ENCODE measurements at regions of chr16 and their contacts with region 1.

Region 1: GRCh38 chr16:84952335-84953189 is 58.8 kb downstream of the ZDHHC7 start:
- DNase-seq: peak; percentile 75 to 81 (median 78)
- ATAC-seq: peak; percentile 90 to 96 (median 93)
- H3K4me3 ChIP-seq: no peak overlapping the region
- H3K27ac ChIP-seq: peak overlapping the region in 11 of 12 donors; percentile 3 to 82 (median 39)
- H3K4me1 ChIP-seq: peaks cover 0 to 21% (median 14%) of the 10 kb centered on the region in 12 donors
- H3K27me3 ChIP-seq: no peaks in the 10 kb centered on the region
- CTCF ChIP-seq: peak; percentile 90 to 95 (median 93)
- POLR2A ChIP-seq: no peak

Region 2: GRCh38 chr16:84462261-84463210 is 490.0 kb before region 1 on chr16:
- intact Hi-C with region 1: no loop called
- DNase-seq: no peak
- ATAC-seq: no peak
- H3K4me3 ChIP-seq: no peak overlapping the region
- H3K27ac ChIP-seq: no peak overlapping the region
- H3K4me1 ChIP-seq: peaks cover 0 to 11% (median 0%) of the 10 kb centered on the region in 12 donors
- H3K27me3 ChIP-seq: no peaks in the 10 kb centered on the region
- CTCF ChIP-seq: no peak
- POLR2A ChIP-seq: no peak

Region 3: DNA sequence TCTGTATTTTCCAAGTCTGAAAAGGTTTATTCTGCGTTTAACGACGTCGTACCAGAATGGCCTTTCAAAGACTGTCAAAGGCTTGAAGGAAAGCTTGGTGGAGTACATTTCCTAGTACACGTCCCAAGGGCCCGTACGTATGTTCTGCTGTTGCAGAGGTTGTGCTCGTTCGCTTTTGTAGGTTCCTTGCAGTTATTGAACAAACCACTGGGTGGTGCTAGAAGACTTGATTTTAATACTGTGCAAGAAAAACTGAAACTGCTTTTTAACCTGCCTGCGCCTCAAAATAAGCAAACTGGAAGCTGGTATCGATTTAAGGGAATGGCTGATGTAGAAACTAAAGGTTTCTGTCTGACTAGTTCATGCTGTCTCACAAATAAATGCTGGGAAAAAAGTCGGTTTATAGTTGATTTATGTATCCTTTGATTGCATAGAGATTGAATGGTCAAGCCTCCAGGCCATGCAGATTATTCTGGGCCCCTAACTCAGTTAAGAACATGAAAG is 198.2 kb before region 1 on chr16:
- intact Hi-C with region 1: loop called (anchors 1 to 5 kb)
- DNase-seq: peak in 3 of 5 donors; percentile 46 to 62 (median 60)
- ATAC-seq: peak in 3 of 4 donors; percentile 75 to 82 (median 78)
- H3K4me3 ChIP-seq: no peak overlapping the region
- H3K27ac ChIP-seq: peak overlapping the region in 1 of 12 donors; percentile 54
- H3K4me1 ChIP-seq: peaks cover 0 to 66% (median 16%) of the 10 kb centered on the region in 12 donors
- H3K27me3 ChIP-seq: no peaks in the 10 kb centered on the region
- CTCF ChIP-seq: peak; percentile 75 to 90 (median 84)
- POLR2A ChIP-seq: no peak

Region 4: GRCh38 chr16:84819644-84820324 is 132.8 kb before region 1 on chr16 and contains the start of gene CRISPLD2:
- intact Hi-C with region 1: loop called in 1 of 10 experiments (anchors 5 kb)
- DNase-seq: peak; percentile 91 to 97 (median 96)
- ATAC-seq: peak; percentile 82 to 97 (median 93)
- H3K4me3 ChIP-seq: peak within 1 kb of the TSS; percentile 9 to 84 (median 62)
- H3K27ac ChIP-seq: peak within 1 kb of the TSS in 9 of 12 donors; percentile 20 to 97 (median 75)
- H3K4me1 ChIP-seq: peaks cover 0 to 42% (median 8%) of the 10 kb centered on the region in 12 donors
- H3K27me3 ChIP-seq: peaks cover 0 to 9% (median 0%) of the 10 kb centered on the region in 9 donors
- CTCF ChIP-seq: no peak
- POLR2A ChIP-seq: peak; percentile 71 to 95
- total RNA-seq, gene CRISPLD2: 8.0 to 153 (median 12.9) TPM

Region 5: DNA sequence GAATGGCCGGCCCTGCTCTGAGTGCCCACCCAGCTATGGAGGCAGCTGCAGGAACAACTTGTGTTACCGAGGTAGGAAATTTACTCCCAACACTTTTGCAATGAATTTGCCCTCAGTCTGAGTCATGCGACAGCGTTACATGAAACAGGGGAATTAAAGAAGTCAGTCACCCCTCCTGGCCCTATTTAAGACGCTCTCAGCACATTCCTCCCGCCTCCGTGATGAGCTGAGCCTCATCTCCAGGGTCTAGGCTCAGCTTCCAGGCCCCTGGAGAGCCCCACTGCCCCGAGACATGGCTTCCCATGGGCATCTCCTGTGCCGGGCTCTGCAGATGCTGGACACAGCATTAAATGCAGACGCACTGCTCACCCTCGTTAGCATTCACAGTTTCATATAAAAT is 97.8 kb before region 1 on chr16:
- intact Hi-C with region 1: no loop called
- DNase-seq: no peak
- ATAC-seq: no peak
- H3K4me3 ChIP-seq: no peak overlapping the region
- H3K27ac ChIP-seq: no peak overlapping the region
- H3K4me1 ChIP-seq: no peaks in the 10 kb centered on the region
- H3K27me3 ChIP-seq: no peaks in the 10 kb centered on the region
- CTCF ChIP-seq: no peak
- POLR2A ChIP-seq: no peak

Region 6: GRCh38 chr16:84925092-84925772 is 27.3 kb before region 1 on chr16:
- intact Hi-C with region 1: loop called in 3 of 10 experiments (anchors 1 kb)
- DNase-seq: peak; percentile 56 to 86 (median 64)
- ATAC-seq: peak in 1 of 4 donors; percentile 19
- H3K4me3 ChIP-seq: no peak overlapping the region
- H3K27ac ChIP-seq: peak overlapping the region in 8 of 12 donors; percentile 44 to 89 (median 54)
- H3K4me1 ChIP-seq: peaks cover 0 to 69% (median 38%) of the 10 kb centered on the region in 12 donors
- H3K27me3 ChIP-seq: no peaks in the 10 kb centered on the region
- CTCF ChIP-seq: peak; percentile 64 to 91 (median 80)
- POLR2A ChIP-seq: no peak

Region 7: DNA sequence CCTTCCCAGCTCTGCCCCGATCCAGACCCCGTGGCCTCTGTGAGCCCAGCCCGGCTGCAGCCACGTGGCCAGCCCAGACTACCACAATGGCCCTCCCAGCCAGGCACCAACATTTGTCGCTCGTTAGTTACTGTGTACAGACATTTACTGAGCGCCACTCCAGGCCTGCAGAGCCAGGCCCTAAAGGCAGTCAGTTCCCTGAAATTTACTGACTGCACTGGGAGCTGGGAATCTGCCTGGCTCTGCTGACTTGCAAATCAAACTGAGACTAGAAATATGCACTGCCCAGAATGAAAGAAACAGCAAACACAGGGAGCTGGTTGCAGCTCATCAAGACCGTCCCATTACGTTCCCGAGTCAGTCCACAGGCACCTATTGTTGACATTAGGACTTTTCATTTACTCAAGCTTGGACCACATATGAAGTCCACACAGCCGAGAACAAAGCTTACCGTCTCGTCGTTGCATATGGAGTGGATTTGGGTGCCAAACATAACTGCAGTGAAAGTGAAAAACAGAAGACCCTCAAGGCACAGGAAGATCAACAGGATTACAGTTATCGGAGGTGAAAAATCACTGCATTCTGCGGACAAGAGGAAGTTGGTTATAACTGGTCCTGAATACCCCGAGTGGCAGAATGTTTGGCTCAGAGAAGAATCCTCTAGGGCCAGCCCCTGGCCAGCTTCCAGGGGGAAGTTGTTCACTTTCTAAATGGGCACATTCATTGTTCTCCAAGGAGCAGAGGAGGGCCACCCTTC is 24.3 kb after region 1 on chr16:
- intact Hi-C with region 1: no loop called
- DNase-seq: peak; percentile 44 to 79 (median 59)
- ATAC-seq: peak in 1 of 4 donors; percentile 26
- H3K4me3 ChIP-seq: no peak overlapping the region
- H3K27ac ChIP-seq: peak overlapping the region in 2 of 12 donors; percentile 55 to 61
- H3K4me1 ChIP-seq: peaks cover 0 to 30% (median 9%) of the 10 kb centered on the region in 12 donors
- H3K27me3 ChIP-seq: no peaks in the 10 kb centered on the region
- CTCF ChIP-seq: no peak
- POLR2A ChIP-seq: no peak